Dorsolateral prefrontal cortex (tissue), 120 donors: ENCODE measurements at regions of chr3 and their contacts with region 1.

Region 1: GRCh38 chr3:194339356-194339755 is 11.8 kb downstream of the CPN2 start:
- DNase-seq: no peak
- H3K4me3 ChIP-seq: no peak overlapping the region
- H3K27ac ChIP-seq: no peak overlapping the region
- H3K27me3 ChIP-seq: peaks cover 0 to 13% (median 0%) of the 10 kb centered on the region in 45 donors
- CTCF ChIP-seq: no peak

Region 2: GRCh38 chr3:194395778-194396547 is 56.6 kb after region 1 on chr3:
- intact Hi-C with region 1: loop called in 1 of 2 experiments (anchors 5 kb)
- DNase-seq: no peak
- H3K4me3 ChIP-seq: peak overlapping the region in 3 of 59 donors; percentile 6 to 52 (median 43)
- H3K27ac ChIP-seq: no peak overlapping the region
- H3K27me3 ChIP-seq: peaks cover 0 to 57% (median 30%) of the 10 kb centered on the region in 45 donors
- CTCF ChIP-seq: no peak

Region 3: DNA sequence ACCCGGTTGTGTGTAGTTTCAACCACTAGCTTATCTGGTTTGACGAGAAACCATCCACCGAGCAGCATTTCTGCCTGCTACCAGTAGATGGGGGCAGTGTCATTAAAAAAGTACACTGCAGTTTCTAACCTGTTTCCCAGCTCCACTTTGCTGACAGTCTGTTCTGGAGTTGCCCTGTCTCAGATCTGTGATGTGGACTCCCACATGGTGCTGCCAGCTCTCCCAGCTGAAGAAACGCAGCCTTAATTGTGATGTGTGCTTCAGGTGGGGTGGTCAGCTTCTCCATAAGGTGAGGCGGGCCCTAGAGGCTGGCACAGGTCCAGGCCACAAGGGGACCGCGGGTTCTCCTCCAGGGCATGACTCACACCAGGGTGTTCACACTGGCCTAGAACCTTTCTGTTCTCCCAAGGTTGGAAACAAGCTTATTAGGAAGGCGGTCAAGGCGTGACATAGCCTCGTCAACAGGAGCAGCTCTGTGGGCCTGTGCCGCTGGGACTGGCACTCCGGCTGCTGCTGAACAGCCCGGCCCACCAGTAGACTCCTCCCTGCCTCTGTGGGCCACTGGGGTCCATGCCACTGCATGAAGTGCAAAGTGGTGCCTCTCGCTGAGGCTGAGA is 343.4 kb after region 1 on chr3:
- intact Hi-C with region 1: no loop called
- DNase-seq: peak; percentile 33 to 85 (median 70)
- H3K4me3 ChIP-seq: peak overlapping the region in 2 of 59 donors; percentile 15 to 16
- H3K27ac ChIP-seq: peak overlapping the region in 7 of 59 donors; percentile 12 to 54 (median 25)
- H3K27me3 ChIP-seq: peaks cover 0 to 6% (median 0%) of the 10 kb centered on the region in 45 donors
- CTCF ChIP-seq: peak; percentile 58 to 98 (median 92)